GM10248 (cell line): ENCODE measurements at regions of chr4 and their contacts with region 1.

Region 1: DNA sequence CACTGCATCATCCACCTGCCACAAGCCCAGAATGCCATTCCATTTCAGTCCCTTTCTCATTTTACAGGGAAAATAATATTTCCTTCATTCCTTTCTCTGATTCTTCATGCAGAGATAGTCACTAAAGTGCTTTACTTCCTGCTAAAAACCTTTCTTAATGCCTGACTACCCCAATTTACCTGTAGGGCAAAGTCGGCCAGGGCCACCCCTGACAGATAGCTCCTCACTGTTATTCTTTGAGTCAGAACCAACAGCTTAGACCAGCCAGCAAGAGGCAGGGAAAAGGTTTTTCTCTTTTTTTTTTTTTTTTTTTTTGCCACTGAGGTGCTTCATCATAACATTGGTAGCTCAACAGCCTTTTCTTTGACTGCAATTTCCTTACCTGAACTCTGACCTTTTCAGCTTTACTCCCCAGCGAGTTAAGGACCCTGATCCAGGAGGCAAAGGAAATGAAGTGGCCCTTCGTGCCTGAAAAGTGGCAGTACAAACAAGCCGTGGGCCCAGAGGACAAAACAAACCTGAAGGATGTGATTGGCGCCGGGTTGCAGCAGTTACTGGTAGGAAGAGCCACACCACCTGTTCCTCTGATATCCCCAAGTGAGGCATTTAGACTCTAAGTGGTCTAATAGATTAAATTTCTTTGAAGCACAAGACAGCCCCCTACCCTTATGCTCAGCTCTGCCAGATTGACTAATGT is 85.0 kb downstream of the ALPK1 start:
- DNase-seq: no peak
- CTCF ChIP-seq: no peak

Region 2: DNA sequence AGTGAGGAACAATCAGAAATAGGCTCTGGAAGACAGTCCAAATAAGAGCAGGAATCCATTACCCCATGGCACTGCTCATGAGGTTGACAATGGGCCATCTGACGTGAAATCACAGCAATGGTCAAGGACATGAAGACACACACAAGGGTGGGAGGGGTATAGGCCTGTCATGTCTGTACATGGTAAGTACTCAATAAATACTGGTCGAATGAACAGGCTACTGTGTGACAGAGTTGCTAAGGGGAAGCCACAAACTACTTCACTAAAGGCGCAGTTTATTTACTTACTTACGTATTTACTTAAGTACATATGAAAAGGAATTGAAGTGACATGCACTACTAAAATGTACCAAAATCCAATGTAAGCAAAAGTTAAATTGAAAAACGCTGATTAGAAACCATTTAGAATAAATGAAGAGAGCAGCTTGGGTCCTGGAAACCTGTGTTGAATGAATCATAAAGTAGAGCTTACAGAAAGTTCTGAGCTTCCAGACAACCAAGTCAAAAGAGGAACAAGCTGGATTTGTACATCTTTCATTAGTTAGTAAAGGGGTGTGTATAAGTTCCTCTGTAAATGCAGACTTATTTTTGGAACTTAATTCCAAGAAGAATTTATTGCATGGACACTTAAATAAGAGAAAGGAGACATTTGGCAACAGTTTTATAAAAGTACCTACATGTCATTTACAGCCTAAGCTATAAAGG is 52.3 kb before region 1 on chr4:
- CTCF ChIA-PET with region 1: no interaction called
- POLR2A ChIA-PET with region 1: no interaction called
- DNase-seq: no peak
- CTCF ChIP-seq: no peak

Region 3: GRCh38 chr4:112348488-112349158 is 33.5 kb before region 1 on chr4:
- CTCF ChIA-PET with region 1: no interaction called
- POLR2A ChIA-PET with region 1: no interaction called
- DNase-seq: no peak
- CTCF ChIP-seq: no peak

Region 4: DNA sequence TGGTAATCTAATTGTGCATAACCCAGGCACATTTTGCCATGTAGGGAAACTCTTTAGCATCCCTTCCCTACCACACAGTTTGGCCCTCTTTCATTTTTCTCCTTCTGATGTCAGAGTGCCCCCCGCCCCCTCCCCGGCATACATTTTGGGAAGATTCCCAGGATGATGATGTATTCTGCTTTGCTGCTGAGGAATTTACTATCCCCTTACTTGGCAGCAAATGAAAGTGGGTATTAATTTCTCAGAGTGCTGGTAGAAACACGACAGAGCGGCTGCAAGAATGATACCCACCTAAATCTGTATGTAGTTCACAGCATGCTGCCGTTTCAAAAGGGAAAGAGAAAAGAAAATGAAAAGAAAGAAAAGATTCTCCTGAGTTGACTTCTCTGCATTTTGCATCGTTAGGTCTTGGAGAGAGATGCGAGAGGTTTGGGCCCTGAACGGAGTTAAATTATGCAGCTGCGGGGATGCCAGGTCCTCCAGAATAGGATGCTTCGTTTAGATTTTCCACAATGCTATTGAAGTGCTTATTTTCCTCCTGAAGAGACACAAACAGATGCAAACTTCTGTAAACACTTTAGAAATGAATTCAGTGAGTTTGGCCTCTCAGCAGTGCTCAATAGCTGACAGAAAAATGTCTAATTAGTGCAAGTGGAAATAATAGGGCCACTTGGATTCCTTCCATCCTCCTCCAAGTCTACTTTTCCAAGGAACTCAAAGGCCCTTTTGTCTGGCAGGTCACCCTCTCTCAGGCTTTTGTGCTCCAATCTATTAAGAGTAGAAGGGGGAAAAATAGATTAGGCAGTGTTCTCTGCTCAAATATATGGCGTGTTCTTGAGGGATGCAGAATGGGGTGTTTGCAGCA is 21.2 kb after region 1 on chr4:
- CTCF ChIA-PET with region 1: interaction called, 18 read pairs
- POLR2A ChIA-PET with region 1: no interaction called
- DNase-seq: no peak
- CTCF ChIP-seq: no peak

Region 5: DNA sequence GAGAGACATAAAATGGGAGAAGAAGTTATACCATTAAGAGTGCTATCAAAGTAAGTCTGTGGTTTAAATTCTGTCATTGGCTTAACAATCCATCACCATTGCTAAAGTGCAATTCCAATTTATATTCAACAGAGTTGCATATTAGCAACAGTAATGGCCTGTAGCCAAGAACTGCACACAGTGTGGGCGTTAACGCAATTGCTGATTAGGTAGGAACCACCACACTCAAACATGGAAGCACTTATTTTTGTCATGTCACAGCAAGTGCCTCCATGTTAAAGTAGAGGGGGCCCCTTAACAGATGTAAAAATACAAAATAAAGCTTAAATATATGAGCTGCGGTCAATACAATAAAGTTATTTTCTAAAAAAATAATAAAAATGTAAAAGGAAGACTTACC is 265.6 kb after region 1 on chr4:
- CTCF ChIA-PET with region 1: no interaction called
- POLR2A ChIA-PET with region 1: no interaction called
- DNase-seq: no peak
- CTCF ChIP-seq: no peak